Endothelial cell of umbilical vein (primary cell): ENCODE measurements at regions of chr7 and their contacts with region 1.

Region 1: GRCh38 chr7:82105463-82105862 is 335.6 kb upstream of the HGF start:
- DNase-seq: peak; percentile 78
- H3K4me3 ChIP-seq: no peak overlapping the region
- H3K27ac ChIP-seq: peak overlapping the region; percentile 70
- H3K4me1 ChIP-seq: peaks cover 27% of the 10 kb centered on the region
- H3K27me3 ChIP-seq: no peaks in the 10 kb centered on the region
- CTCF ChIP-seq: no peak
- POLR2A ChIP-seq: no peak

Region 2: GRCh38 chr7:80841423-80842218 is 1263.8 kb before region 1 on chr7:
- CTCF ChIA-PET with region 1: no interaction called
- POLR2A ChIA-PET with region 1: no interaction called
- dilution Hi-C with region 1: no loop called
- intact Hi-C with region 1: no loop called
- DNase-seq: no peak
- H3K4me3 ChIP-seq: no peak overlapping the region
- H3K27ac ChIP-seq: no peak overlapping the region
- H3K4me1 ChIP-seq: no peaks in the 10 kb centered on the region
- H3K27me3 ChIP-seq: no peaks in the 10 kb centered on the region
- CTCF ChIP-seq: no peak
- POLR2A ChIP-seq: no peak

Region 3: GRCh38 chr7:82598958-82599357 is 493.5 kb after region 1 on chr7:
- CTCF ChIA-PET with region 1: no interaction called
- POLR2A ChIA-PET with region 1: no interaction called
- dilution Hi-C with region 1: no loop called
- intact Hi-C with region 1: loop called (anchors 2 kb)
- DNase-seq: peak; percentile 86
- H3K4me3 ChIP-seq: no peak overlapping the region
- H3K27ac ChIP-seq: no peak overlapping the region
- H3K4me1 ChIP-seq: peaks cover 30% of the 10 kb centered on the region
- H3K27me3 ChIP-seq: no peaks in the 10 kb centered on the region
- CTCF ChIP-seq: no peak
- POLR2A ChIP-seq: no peak

Region 4: DNA sequence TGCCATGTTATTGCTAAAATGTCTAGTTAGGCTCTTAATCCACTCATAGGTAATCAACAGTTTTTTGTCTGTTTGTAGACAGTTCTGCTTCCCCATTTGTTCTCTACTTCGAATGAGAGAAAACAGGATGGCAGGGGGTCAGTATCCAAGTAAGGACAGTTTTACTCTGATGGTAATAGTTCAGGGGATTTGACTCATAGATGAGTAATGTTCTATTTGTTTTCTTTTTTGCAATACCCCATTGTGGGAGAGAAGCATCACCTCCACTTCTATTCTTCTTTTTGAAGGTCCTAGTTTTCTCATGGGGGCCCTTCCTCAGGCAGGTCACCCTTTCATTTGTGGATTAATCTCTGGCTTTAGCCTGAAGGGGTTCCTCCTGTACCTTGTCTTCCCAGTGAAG is 1043.3 kb after region 1 on chr7:
- CTCF ChIA-PET with region 1: no interaction called
- POLR2A ChIA-PET with region 1: no interaction called
- dilution Hi-C with region 1: no loop called
- intact Hi-C with region 1: no loop called
- DNase-seq: peak; percentile 37
- H3K4me3 ChIP-seq: no peak overlapping the region
- H3K27ac ChIP-seq: peak overlapping the region; percentile 11
- H3K4me1 ChIP-seq: peaks cover 11% of the 10 kb centered on the region
- H3K27me3 ChIP-seq: no peaks in the 10 kb centered on the region
- CTCF ChIP-seq: no peak
- POLR2A ChIP-seq: no peak